ENCODE measurements at regions of chrX and their contacts with region 1.

Region 1: DNA sequence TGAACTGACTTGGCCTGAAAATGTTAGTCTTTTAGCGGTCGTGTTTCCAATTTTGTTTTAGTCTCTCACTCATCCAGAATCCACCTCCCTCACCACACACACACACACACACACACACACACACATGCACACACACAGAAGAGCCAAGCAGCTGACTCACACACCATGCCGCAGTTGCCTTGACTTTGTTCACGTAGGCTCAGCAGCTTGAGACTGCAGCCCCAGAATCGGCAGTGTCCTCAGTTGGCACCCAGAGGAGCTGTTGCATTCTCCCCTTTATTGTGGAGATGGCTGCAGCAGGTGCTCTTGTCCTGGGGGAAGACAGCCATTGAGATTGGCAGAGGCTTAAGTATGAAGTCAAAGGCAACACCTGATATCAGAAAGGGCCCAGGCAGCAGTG is 20.9 kb upstream of the XPNPEP2 start:
- DNase-seq: no peak
- H3K4me3 ChIP-seq: no peak overlapping the region
- H3K27ac ChIP-seq: no peak overlapping the region
- H3K4me1 ChIP-seq: no peaks in the 10 kb centered on the region
- H3K27me3 ChIP-seq: peaks cover 0 to 42% of the 10 kb centered on the region in 2 donors
- CTCF ChIP-seq: no peak
- POLR2A ChIP-seq: no peak

Region 2: DNA sequence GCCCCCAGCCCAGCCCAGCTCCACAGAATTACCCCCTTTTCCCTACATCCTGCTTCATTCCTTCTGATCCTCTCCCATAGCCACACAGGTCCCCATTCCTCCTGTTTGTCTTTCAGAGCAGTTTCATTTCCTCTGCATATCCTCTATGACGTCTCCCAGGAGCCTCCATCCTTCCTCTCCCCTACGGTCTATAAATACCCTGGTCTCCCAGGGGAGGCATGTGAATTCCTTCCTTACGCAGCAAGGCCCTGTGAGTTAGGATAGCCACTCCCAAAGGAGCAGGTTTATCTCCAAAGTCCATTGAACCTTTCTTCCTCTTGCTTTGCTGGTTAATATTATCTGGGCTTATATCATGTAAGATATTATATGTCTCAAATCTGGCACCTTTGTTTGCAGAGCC is 54.7 kb before region 1 on chrX:
- intact Hi-C with region 1: loop called (anchors 2 kb)
- DNase-seq: no peak
- H3K4me3 ChIP-seq: no peak overlapping the region
- H3K27ac ChIP-seq: no peak overlapping the region
- H3K4me1 ChIP-seq: no peaks in the 10 kb centered on the region
- H3K27me3 ChIP-seq: peaks cover 0 to 30% of the 10 kb centered on the region in 2 donors
- CTCF ChIP-seq: no peak
- POLR2A ChIP-seq: no peak

Region 3: GRCh38 chrX:129785160-129785947 is 67.5 kb after region 1 on chrX:
- intact Hi-C with region 1: loop called (anchors 2 kb)
- DNase-seq: no peak
- H3K4me3 ChIP-seq: no peak overlapping the region
- H3K27ac ChIP-seq: no peak overlapping the region
- H3K4me1 ChIP-seq: no peaks in the 10 kb centered on the region
- H3K27me3 ChIP-seq: peaks cover 0 to 28% of the 10 kb centered on the region in 2 donors
- CTCF ChIP-seq: no peak
- POLR2A ChIP-seq: no peak